Posterior vena cava (tissue), 2 donors: ENCODE measurements at regions of chr1 and their contacts with region 1.

Region 1: GRCh38 chr1:235099001-235099400 is 29.6 kb downstream of the TOMM20 start:
- DNase-seq: no peak

Region 2: GRCh38 chr1:234486498-234487448 is 612.2 kb before region 1 on chr1:
- intact Hi-C with region 1: loop called in 1 of 2 experiments (anchors 5 kb)
- DNase-seq: no peak